ENCODE measurements at regions of chr1 and their contacts with region 1.

Region 1: DNA sequence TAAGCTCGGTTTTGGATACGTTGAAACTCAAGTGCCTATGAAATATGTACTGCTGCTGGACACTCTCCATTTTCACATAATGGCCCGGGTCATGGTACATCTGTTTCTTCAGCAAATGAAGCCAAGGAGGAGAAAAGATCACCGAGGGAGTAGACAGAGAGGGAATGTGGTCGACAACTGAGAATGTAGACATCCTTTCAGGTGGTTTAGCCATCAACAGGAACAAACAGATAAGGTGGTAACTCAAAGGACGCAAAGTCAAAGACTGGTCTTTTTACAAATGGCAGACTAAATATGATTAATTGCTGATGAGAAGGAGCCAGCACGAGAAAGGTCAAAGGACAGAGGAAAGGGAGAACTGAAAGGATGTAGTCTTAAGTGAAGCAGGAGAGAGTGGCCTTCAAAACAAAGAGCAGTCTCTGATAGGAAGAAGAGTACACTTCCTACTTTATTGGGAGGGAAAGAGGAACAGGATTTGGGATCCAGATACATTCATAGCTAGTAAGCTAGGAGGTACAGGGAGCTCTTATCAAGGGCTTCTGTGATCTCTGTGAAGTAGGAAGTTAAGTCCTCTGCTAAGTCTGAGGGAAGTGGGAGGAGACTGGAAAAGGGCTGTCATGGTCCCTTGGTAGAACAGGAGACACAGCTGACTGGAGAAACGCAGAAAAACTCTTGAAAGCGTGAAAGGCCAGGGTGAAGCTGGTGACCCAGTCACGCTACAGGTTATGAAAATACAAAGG is 28.3 kb downstream of the NUP133 start:
- DNase-seq: no peak
- H3K4me3 Mint-ChIP-seq: no peak overlapping the region
- H3K27ac Mint-ChIP-seq: no peak overlapping the region
- H3K4me1 Mint-ChIP-seq: peaks cover 10% of the 10 kb centered on the region
- H3K27me3 Mint-ChIP-seq: no peaks in the 10 kb centered on the region

Region 2: DNA sequence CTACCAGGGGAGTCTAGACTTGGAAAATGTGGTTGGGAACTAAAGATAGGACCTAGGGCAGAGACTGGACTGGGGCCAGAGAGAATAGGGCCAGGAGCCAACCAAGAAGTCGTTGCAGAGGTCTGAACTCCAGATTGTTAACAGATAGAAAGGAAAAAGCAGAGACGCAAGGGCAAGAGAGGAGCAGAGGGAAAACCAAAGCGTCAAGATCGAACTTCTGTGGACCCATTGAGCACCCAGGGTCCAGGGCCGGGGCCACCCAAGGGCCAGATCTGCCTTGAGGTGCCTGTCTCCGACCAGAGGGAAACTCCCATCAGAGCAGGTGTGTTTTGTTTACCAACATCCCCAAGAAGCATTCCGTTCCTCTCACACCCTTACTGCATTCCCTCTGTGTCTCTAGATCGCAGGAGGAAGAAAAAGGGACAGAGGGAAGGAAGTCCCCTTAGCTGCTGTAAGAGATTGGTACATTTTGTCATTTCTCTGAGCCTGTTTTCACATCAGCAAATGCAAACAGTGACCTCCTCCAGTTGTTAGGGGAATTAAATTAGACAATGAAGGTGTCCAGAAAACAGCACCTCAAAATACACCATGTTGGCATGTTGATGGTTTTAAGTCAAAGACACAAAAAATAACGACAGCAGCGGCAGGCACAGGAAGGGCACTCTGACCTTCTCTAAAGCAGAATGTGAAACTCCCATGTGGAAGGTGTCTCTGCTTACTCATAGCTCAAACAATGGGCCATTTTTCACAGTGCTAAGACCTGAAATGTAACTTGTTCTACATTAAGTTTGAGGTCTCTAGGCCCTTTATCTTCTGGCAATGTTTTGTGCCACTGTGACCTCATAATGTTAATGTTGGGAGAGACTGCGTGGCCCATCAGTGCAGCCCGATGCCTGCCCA is 314.7 kb before region 1 on chr1:
- CTCF ChIA-PET with region 1: no interaction called
- POLR2A ChIA-PET with region 1: no interaction called
- DNase-seq: no peak
- H3K4me3 Mint-ChIP-seq: no peak overlapping the region
- H3K27ac Mint-ChIP-seq: no peak overlapping the region
- H3K4me1 Mint-ChIP-seq: peaks cover 4% of the 10 kb centered on the region
- H3K27me3 Mint-ChIP-seq: no peaks in the 10 kb centered on the region

Region 3: GRCh38 chr1:229238674-229239415 is 241.0 kb before region 1 on chr1:
- CTCF ChIA-PET with region 1: no interaction called
- POLR2A ChIA-PET with region 1: no interaction called
- DNase-seq: no peak
- H3K4me3 Mint-ChIP-seq: no peak overlapping the region
- H3K27ac Mint-ChIP-seq: no peak overlapping the region
- H3K4me1 Mint-ChIP-seq: no peaks in the 10 kb centered on the region
- H3K27me3 Mint-ChIP-seq: peaks cover 4% of the 10 kb centered on the region

Region 4: DNA sequence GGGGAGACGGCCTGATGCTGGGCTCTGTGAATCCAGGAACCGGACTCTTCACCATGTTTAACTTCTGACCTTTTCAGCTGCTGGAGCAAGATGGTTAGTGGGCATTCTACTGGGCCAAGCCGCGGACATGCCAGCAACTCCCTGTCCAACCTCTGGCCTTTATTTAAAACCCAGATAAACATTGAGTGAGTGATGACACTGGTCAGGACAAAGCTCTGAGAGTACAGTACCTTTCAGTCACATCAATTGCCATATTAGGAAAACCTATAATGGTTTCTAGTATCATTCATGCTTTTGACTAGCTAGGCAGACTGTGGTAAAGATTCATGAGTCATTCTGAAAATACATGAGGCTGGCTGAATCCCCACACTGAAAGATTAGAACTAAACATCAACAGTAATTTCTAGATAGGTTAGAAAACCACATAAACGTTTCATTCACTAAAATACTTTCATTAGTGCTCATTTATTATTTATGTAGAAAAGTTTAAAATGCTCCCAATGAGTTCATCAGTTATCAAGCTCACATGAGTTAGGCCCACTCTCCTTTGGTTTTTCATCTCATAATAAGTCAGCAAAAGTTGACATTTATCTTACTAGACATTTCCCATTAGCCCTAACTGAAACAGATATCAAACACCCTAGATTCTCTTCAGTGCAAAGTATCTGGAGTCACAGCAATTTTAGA is 38.8 kb before region 1 on chr1:
- CTCF ChIA-PET with region 1: interaction called, 11 read pairs
- POLR2A ChIA-PET with region 1: no interaction called
- DNase-seq: no peak
- H3K4me3 Mint-ChIP-seq: no peak overlapping the region
- H3K27ac Mint-ChIP-seq: peak overlapping the region; percentile 58
- H3K4me1 Mint-ChIP-seq: peaks cover 23% of the 10 kb centered on the region
- H3K27me3 Mint-ChIP-seq: peaks cover 24% of the 10 kb centered on the region

Region 5: GRCh38 chr1:229466887-229467286 is 12.9 kb before region 1 on chr1:
- CTCF ChIA-PET with region 1: interaction called, 17 read pairs
- POLR2A ChIA-PET with region 1: no interaction called
- DNase-seq: no peak
- H3K4me3 Mint-ChIP-seq: no peak overlapping the region
- H3K27ac Mint-ChIP-seq: no peak overlapping the region
- H3K4me1 Mint-ChIP-seq: no peaks in the 10 kb centered on the region
- H3K27me3 Mint-ChIP-seq: no peaks in the 10 kb centered on the region

Region 6: DNA sequence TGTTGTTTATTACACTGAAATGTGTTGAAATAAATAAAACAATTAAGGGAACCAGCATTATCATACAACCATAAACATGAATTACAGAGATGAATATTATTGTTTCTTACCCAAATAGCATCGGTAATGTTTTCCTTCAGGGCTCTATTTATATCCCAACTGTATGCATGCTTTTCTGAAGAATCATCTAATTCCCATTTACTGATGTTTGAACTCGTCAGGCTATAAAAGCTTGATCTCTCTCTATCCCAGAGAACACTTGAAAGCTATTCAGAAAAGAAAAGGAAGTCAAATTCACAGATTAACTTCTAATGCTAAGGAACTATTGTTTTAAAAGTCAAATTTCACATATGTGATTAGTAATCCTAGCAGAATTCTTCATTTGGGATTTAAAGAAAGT is 16.0 kb after region 1 on chr1:
- CTCF ChIA-PET with region 1: interaction called, 16 read pairs
- POLR2A ChIA-PET with region 1: interaction called, 3 read pairs
- DNase-seq: no peak
- H3K4me3 Mint-ChIP-seq: no peak overlapping the region
- H3K27ac Mint-ChIP-seq: no peak overlapping the region
- H3K4me1 Mint-ChIP-seq: no peaks in the 10 kb centered on the region
- H3K27me3 Mint-ChIP-seq: no peaks in the 10 kb centered on the region

Region 7: GRCh38 chr1:229514578-229515275 is 34.9 kb after region 1 on chr1:
- CTCF ChIA-PET with region 1: interaction called, 11 read pairs
- POLR2A ChIA-PET with region 1: no interaction called
- DNase-seq: peak; percentile 54
- H3K4me3 Mint-ChIP-seq: no peak overlapping the region
- H3K27ac Mint-ChIP-seq: no peak overlapping the region
- H3K4me1 Mint-ChIP-seq: peaks cover 7% of the 10 kb centered on the region
- H3K27me3 Mint-ChIP-seq: no peaks in the 10 kb centered on the region

Region 8: GRCh38 chr1:229537894-229538293 is 58.1 kb after region 1 on chr1:
- CTCF ChIA-PET with region 1: no interaction called
- POLR2A ChIA-PET with region 1: no interaction called
- DNase-seq: no peak
- H3K4me3 Mint-ChIP-seq: no peak overlapping the region
- H3K27ac Mint-ChIP-seq: no peak overlapping the region
- H3K4me1 Mint-ChIP-seq: peaks cover 16% of the 10 kb centered on the region
- H3K27me3 Mint-ChIP-seq: no peaks in the 10 kb centered on the region